Left colon (tissue), 2 donors: ENCODE measurements at regions of chr2 and their contacts with region 1.

Region 1: DNA sequence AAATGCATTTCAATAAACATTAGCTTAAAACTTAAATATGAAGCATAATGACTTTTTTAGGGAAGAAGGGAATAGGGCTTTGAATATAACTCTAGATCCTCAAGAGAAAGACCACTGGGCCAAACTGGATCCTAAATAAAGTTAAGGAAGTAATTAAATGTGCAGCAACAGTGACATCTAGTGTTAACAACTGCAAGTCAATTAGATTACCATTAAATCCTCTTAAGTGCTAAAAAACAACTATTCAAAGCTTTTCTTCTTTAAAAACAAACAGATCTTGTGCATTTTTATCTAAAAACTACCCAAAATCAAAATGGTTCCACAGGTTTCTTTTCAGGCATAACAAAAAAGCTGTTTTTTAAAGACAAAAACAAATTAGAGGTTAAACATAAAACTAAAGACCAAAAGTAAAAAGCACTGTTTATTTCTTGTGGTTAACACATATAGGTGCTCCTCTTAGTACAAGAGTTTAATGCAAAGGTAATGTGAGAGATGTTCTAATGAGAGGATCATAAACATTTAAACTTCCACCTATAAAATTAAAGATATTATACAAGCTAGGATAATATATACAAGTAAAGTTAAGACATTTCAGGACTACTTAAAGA is 111.4 kb downstream of the THADA start:
- DNase-seq: no peak
- ATAC-seq: peak; percentile 62

Region 2: DNA sequence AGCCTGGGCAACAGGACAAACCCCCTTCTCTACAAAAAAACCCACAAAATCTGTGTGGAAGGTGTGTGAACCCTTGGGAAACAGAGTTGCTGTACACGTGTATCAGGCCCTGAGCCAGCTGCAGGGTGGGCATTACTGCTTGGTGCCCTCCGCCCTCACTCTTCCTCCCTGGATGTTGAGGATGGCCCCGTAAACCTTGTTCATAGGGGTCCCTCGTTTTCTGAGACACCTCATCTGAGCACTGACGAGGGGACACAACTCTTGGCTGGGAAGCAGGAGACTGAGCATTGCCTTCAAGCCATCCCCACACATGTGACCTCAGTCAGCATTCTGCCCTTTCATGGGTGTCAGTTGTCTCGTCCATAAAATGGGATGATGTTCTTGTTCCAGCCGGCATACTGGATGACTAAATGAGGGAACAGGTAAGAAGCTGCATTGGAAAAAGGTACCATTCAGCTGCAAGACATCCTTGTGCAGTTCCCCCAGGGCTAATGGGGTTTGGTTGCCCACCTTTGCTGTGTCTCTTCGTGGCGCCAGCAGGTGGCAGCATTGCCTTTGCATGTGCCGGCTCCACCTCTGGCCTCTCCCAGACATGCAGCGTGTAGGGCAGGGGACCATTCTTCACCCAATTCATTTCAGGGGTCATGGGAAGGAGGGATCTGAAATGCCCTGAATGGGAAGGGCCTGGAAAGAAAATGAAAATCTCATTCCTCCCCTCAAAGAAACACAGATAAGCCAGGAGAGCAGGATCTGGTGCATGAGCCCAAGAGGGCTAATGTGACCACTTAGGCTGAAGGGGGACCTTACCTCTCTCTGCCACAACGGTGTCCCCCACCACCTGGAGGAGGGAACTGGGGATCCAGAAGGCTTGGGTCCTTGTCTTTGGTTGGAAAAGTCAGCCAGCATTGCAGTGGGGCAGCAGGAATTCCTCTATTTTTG is 655.7 kb before region 1 on chr2:
- intact Hi-C with region 1: loop called in 1 of 2 experiments (anchors 10 kb)
- DNase-seq: peak; percentile 61 to 74
- ATAC-seq: peak; percentile 88

Region 3: DNA sequence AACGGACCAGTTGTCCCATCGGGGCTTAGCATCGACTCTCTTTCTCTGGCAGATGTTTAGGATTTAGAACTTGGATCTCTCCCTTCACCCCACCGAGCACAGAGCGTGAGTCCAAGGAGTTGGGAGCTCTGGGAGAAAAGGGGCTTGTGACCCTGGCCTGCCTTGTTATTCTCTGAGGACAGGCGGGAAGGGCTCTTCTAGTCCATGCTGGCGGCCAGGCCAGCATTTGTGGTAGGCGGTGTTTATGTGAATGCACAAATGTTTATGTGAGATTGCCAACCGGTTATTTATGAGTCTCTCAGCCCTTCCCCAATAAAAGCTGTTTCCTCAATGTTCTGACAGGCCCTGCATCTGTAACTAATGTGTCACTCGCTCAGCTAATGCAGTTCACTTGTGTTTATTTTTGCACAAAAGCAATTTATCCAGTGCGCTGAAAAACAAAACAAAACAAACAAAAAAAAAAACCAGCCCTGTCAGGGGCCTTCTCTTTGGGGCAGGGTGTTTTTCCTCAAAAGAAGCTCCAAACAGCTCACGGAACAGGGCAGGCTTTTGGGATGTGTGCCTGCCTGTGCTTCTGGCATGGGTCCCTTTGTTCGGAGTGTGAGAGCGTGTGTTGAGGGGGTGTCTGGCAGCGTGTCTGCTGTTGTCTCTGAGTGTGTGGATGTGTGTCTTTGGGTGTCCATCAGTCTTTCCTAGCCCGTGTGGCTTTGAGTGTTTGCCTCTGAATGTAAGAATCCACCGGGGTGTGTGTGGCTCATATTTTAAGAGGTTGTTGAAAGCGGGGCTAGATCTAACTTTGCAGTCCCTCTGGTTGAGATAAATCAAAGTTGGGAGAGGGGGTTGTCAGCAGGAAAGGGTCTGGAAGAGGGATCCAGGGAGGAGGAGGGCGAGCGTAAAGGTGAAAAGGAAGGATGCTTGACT is 639.3 kb before region 1 on chr2:
- intact Hi-C with region 1: no loop called
- DNase-seq: peak; percentile 34 to 67
- ATAC-seq: peak; percentile 46

Region 4: DNA sequence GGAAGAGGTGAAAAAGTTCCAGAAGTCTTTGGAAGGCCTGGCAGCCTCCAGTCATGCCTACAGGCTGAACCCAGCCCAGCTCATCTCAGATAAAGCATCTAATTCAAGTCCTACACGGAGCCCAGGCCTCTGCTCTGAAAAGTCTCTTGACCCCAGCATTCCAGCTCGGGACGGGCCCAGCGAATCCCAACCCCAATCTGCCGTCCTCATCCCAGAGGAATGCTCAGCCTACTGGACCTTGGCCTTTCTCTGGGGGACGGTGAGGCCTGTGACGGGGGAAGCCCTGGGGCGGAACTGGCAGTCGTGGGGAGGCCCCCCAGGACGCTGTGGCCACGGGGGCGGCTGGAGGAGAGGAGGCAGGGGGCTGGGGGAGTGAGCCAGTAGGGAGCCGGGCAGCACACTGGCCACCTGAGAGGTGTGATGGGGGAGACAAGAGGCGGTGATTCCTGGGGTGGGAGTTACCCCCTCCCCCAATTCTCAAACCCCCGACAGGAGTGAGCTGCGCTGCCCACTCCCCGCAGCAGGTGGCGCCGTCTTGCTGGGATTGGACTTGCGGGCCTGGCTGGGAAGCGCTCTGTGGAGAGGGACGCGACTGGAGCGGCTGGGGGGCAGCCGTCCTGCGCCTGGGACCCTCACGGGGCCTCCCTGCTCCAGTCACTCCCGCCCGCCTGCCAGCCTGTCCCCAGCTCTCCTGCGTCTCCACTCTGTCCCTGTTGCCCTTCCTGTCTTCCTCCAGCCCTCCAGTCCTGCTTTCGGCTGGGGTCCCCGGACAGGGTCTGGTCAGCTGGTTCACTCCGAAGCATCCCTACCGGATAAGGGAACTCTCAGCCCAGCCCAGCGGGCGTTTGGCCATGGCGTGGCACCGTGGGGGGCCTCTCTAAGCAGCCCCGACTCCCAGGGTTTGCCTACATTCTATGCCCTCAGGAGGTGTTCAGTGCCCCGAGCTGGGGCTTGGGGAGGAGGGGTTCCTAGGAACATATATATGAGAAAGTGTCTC is 509.4 kb before region 1 on chr2:
- intact Hi-C with region 1: loop called in 1 of 2 experiments (anchors 10 kb)
- DNase-seq: peak; percentile 64 to 82
- ATAC-seq: peak; percentile 46

Region 5: GRCh38 chr2:43131024-43131889 is 353.2 kb before region 1 on chr2:
- intact Hi-C with region 1: loop called in 1 of 2 experiments (anchors 10 kb)
- DNase-seq: peak; percentile 86 to 97
- ATAC-seq: peak; percentile 67

Region 6: GRCh38 chr2:43239981-43240761 is 244.3 kb before region 1 on chr2:
- intact Hi-C with region 1: loop called in 1 of 2 experiments (anchors 10 kb)
- DNase-seq: no peak
- ATAC-seq: peak; percentile 19